ENCODE measurements at regions of chr4 and their contacts with region 1.

Region 1: DNA sequence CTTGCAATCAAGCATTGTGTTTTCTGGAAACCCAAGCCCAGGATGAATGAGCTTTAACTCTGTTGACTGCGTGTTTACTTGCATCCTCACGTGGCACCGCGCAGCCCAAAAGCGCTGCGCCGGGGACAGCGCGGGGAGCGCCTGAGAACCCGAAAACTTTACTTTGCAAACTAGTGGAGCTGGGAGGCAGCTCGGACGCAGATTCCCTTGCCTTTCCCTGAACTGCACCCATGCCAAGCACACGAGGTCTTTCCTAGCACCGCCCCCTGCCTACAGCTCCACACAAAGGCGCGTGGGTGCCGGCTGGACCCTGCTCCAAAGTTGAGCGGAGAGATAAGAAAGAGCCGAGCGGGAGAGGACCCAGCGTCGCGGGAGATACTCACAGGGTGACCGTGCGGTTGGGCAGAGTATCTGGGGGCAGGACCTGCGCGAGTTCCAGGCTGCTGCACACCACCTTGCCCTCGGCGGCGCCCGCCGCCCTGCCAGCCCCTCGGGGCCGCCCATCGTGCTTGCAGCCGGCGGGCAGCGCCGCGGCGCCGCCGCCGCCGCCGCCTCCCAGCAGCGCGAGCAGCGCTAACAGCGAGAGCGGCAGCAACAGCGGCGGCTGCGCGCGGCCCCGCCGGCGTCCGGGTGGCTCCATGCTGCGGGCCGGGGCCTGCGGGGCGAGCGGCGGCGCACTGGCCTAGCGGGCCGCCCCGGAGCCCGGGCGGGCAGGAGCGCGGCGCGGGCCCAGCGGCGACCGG is 550 bp downstream of the ADGRA3 start:
- DNase-seq: peak; percentile 64
- ATAC-seq: peak; percentile 64
- H3K4me3 ChIP-seq: peak overlapping the region; percentile 56
- H3K27ac ChIP-seq: peak overlapping the region; percentile 54
- H3K4me1 ChIP-seq: peaks cover 7% of the 10 kb centered on the region
- H3K27me3 ChIP-seq: no peaks in the 10 kb centered on the region
- CTCF ChIP-seq: no peak
- POLR2A ChIP-seq: peak; percentile 26
- RAD21 ChIP-seq: no peak

Region 2: DNA sequence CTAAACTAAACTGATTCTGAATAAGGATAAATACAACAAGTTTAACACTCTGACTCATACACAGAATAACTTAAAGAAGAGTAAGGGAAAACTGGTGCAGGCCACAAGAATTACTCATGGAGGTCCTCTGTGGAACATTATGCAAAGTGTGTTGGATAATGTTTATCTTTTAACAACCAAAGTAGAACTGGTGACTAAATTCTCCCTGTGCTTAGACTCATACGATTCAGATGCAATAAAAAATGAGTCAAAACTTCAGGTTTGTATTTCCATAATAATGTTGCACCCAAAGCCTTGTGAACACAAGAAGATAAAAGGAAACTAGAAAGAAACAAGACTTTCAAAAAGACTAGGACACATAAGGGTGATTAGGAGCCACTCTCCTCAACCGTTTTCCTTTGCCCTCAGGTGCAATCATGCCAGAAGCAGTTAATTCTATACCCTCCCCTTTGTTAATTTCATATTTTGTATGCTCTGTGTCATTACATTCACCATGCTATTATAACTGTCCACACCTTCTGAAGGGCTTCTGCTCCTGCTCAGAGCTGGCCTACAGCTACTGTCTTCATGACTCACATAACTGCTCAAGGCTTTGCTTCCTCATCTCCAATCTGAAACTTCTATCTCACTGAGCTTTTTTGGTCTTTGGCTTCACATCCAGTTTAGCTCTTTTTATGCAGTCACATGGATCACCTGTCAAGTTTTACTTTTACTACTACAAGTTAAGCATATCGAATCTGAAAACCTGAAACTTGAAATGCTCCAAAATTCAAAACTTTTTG is 626.9 kb before region 1 on chr4:
- CTCF ChIA-PET with region 1: no interaction called
- POLR2A ChIA-PET with region 1: no interaction called
- dilution Hi-C with region 1: no loop called
- in situ Hi-C with region 1: no loop called
- intact Hi-C with region 1: loop called (anchors 10 kb)
- DNase-seq: peak; percentile 93
- ATAC-seq: peak; percentile 95
- H3K4me3 ChIP-seq: no peak overlapping the region
- H3K27ac ChIP-seq: no peak overlapping the region
- H3K4me1 ChIP-seq: peaks cover 4% of the 10 kb centered on the region
- H3K27me3 ChIP-seq: no peaks in the 10 kb centered on the region
- CTCF ChIP-seq: no peak
- POLR2A ChIP-seq: no peak
- RAD21 ChIP-seq: no peak

Region 3: GRCh38 chr4:22410645-22411247 is 104.6 kb before region 1 on chr4:
- CTCF ChIA-PET with region 1: no interaction called
- POLR2A ChIA-PET with region 1: no interaction called
- dilution Hi-C with region 1: no loop called
- in situ Hi-C with region 1: no loop called
- intact Hi-C with region 1: loop called (anchors 5 kb)
- DNase-seq: peak; percentile 33
- ATAC-seq: 0 out of 2 replicates have a peak, but pooled peaks have one; percentile 14
- H3K4me3 ChIP-seq: no peak overlapping the region
- H3K27ac ChIP-seq: no peak overlapping the region
- H3K4me1 ChIP-seq: no peaks in the 10 kb centered on the region
- H3K27me3 ChIP-seq: no peaks in the 10 kb centered on the region
- CTCF ChIP-seq: peak; percentile 62
- POLR2A ChIP-seq: no peak
- RAD21 ChIP-seq: peak; percentile 57

Region 4: GRCh38 chr4:22454955-22455354 is 60.4 kb before region 1 on chr4:
- CTCF ChIA-PET with region 1: no interaction called
- POLR2A ChIA-PET with region 1: no interaction called
- dilution Hi-C with region 1: no loop called
- in situ Hi-C with region 1: no loop called
- intact Hi-C with region 1: loop called (anchors 2 kb)
- DNase-seq: peak; percentile 25
- ATAC-seq: peak; percentile 70
- H3K4me3 ChIP-seq: no peak overlapping the region
- H3K27ac ChIP-seq: no peak overlapping the region
- H3K4me1 ChIP-seq: no peaks in the 10 kb centered on the region
- H3K27me3 ChIP-seq: no peaks in the 10 kb centered on the region
- CTCF ChIP-seq: no peak
- POLR2A ChIP-seq: no peak
- RAD21 ChIP-seq: no peak

Region 5: GRCh38 chr4:22465349-22465748 is 50.0 kb before region 1 on chr4:
- CTCF ChIA-PET with region 1: no interaction called
- POLR2A ChIA-PET with region 1: no interaction called
- dilution Hi-C with region 1: no loop called
- in situ Hi-C with region 1: no loop called
- intact Hi-C with region 1: no loop called
- DNase-seq: no peak
- ATAC-seq: no peak
- H3K4me3 ChIP-seq: no peak overlapping the region
- H3K27ac ChIP-seq: no peak overlapping the region
- H3K4me1 ChIP-seq: no peaks in the 10 kb centered on the region
- H3K27me3 ChIP-seq: no peaks in the 10 kb centered on the region
- CTCF ChIP-seq: no peak
- POLR2A ChIP-seq: no peak
- RAD21 ChIP-seq: no peak

Region 6: DNA sequence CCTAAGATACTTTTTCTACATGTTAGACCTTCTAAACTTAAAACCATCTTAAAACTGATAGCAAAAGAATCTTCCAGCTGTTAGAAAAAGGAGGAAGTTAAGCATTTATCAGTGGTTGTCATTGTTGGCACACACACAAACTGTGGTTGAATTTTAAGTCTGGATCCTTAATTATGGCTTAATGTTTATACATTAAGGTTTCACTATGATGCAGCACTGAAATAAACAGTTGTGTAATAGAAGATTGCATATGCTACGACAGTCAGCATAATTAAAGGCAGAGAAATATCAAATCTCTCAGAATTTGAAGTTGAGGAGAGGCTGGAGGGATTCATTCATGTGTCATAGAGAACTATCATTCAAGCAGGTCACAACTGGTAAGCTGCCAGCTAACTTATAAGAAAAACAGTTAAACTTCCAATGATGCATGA is 31.8 kb before region 1 on chr4:
- CTCF ChIA-PET with region 1: no interaction called
- POLR2A ChIA-PET with region 1: no interaction called
- dilution Hi-C with region 1: no loop called
- in situ Hi-C with region 1: no loop called
- intact Hi-C with region 1: loop called (anchors 2 kb)
- DNase-seq: peak; percentile 90
- ATAC-seq: peak; percentile 54
- H3K4me3 ChIP-seq: no peak overlapping the region
- H3K27ac ChIP-seq: no peak overlapping the region
- H3K4me1 ChIP-seq: peaks cover 14% of the 10 kb centered on the region
- H3K27me3 ChIP-seq: no peaks in the 10 kb centered on the region
- CTCF ChIP-seq: no peak
- POLR2A ChIP-seq: no peak
- RAD21 ChIP-seq: no peak